ENCODE measurements at regions of chr18 and their contacts with region 1.

Region 1: DNA sequence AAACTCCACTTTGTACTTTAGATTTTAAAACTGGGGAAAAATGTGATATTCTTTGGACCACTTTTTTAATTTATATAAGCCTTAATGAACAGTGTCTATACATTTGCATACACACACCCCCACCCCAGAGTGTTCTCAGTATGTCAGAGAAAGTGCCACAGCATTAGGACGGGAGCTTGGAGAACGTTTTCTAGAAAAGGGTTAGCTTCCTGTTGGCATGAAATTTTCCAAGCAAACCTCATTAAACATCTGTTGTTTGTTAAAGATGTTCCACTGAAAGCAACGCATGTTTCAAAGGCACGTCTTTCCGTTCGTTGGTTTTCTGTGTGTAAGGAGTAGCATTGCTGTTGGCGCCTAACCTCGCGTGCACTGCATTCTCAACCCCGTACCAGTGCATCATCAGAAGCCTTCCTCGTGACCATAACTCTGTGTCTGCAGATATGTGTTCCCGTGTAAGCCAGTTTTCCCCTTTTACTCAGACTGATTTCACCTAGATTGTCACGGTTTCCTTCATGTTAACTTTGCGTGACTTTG is 228.5 kb downstream of the ALPK2 start:
- DNase-seq: no peak
- H3K4me3 Mint-ChIP-seq: peak overlapping the region; percentile 28
- H3K27ac Mint-ChIP-seq: peak overlapping the region; percentile 30
- H3K4me1 Mint-ChIP-seq: peaks cover 14% of the 10 kb centered on the region
- H3K27me3 Mint-ChIP-seq: no peaks in the 10 kb centered on the region

Region 2: DNA sequence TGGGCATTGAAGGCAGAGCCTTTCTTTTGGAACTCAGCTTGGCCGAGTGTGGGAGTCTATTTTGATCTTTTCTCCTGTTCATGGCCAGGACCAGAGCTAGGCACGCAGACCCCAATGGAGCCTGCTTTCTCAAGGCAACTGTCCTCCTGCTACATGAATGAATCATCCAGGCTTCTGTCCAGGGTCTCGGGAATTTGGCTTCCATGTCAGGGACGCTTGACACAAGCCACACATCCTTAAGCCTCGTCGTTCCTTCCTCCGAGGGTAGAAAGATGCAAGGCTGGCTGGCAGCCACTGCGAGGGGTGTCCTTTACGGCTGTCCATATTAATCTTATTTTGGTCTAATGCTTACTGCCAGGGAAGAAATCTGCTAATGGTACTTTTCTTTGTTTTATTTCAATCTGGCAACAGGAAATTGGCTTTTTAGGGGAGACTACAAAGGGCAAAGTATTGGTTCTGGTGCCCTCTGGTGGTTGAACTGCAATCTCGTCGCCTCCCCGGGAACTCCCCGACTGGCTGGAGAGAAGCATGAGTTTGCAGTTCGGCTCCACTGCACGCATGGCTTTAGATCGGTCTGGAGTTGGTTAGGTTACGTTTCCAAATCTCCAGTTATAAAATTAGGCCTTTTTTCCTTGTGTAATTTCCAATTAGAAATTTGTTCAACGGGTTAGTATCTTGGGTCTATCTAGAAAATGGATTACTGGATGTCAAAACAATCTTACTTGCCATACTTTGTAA is 93.3 kb after region 1 on chr18:
- intact Hi-C with region 1: loop called (anchors 1 kb)
- DNase-seq: peak; percentile 57
- H3K4me3 Mint-ChIP-seq: no peak overlapping the region
- H3K27ac Mint-ChIP-seq: no peak overlapping the region
- H3K4me1 Mint-ChIP-seq: peaks cover 12% of the 10 kb centered on the region
- H3K27me3 Mint-ChIP-seq: peaks cover 39% of the 10 kb centered on the region

Region 3: GRCh38 chr18:58552057-58552461 is 151.7 kb after region 1 on chr18:
- intact Hi-C with region 1: no loop called
- DNase-seq: no peak
- H3K4me3 Mint-ChIP-seq: no peak overlapping the region
- H3K27ac Mint-ChIP-seq: no peak overlapping the region
- H3K4me1 Mint-ChIP-seq: peaks cover 22% of the 10 kb centered on the region
- H3K27me3 Mint-ChIP-seq: no peaks in the 10 kb centered on the region